ENCODE measurements at regions of chr14 and their contacts with region 1.

Region 1: GRCh38 chr14:88189417-88190191 is 133.5 kb downstream of the KCNK10 start:
- DNase-seq: peak; percentile 65
- ATAC-seq: peak; percentile 96
- H3K4me3 ChIP-seq: peak overlapping the region in 1 of 2 experiments; percentile 39; a peak in 2 of 4 replicates
- H3K27ac ChIP-seq: no peak overlapping the region
- H3K4me1 ChIP-seq: 0 out of 2 replicates have a peak, but pooled peaks cover 2% of the 10 kb centered on the region
- H3K27me3 ChIP-seq: peaks cover 6% of the 10 kb centered on the region; the same call in 1 of the 2 replicates
- CTCF ChIP-seq: peak; percentile 76

Region 2: DNA sequence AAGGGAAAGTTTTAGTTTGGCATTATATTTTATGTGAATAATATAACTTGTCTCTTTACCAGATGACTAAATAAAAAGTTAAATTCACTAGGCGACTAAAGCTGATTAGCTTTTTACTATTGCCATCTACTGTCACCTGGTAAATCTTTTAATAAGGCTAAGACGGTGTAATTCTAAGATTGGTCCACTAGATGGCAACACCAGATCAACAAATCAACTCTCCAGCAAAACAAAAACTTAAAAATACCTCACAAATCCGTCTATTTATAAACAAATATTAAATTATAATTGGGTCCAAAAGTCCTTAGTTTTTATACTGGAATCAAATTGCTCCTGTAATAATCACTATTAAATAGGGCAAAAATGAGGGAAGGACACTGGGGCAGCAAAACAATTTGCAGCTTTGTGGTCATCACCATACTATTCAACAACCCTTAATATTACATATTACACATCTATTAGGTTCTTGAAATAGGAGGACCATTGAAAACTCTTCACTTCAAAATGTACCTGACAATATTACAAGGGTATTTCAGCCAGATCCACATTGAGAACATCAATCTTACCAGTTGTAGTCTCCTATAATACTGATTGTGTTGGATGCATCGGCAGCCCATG is 244.5 kb before region 1 on chr14:
- CTCF ChIA-PET with region 1: no interaction called
- POLR2A ChIA-PET with region 1: no interaction called
- in situ Hi-C with region 1: no loop called
- intact Hi-C with region 1: loop called (anchors 10 kb)
- DNase-seq: peak; percentile 10
- ATAC-seq: no peak
- H3K4me3 ChIP-seq: no peak overlapping the region
- H3K27ac ChIP-seq: no peak overlapping the region
- H3K4me1 ChIP-seq: no peaks in the 10 kb centered on the region
- H3K27me3 ChIP-seq: no peaks in the 10 kb centered on the region
- CTCF ChIP-seq: peak; percentile 66; the same call in 1 of the 2 replicates

Region 3: DNA sequence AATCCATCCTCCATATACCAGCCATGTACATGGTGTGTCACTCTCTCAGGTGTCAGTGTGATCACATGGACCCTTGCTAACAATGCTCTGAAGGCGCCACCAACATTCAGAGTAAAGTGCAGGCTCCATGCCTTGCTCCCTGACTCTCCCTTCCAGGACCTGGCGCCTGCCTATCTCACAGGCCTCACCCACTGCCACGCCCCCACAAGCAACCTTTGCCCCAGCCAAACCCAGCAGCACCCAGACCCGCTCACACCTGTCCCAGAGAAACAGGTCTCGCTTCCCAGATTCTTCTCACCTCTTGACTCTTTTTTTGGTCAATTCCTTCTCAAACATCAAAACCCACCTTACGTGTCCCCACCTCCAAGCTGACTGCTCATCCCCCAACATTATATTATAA is 81.2 kb after region 1 on chr14:
- CTCF ChIA-PET with region 1: no interaction called
- POLR2A ChIA-PET with region 1: no interaction called
- in situ Hi-C with region 1: no loop called
- intact Hi-C with region 1: no loop called
- DNase-seq: no peak
- ATAC-seq: no peak
- H3K4me3 ChIP-seq: no peak overlapping the region
- H3K27ac ChIP-seq: no peak overlapping the region
- H3K4me1 ChIP-seq: no peaks in the 10 kb centered on the region
- H3K27me3 ChIP-seq: no peaks in the 10 kb centered on the region; the same call in 1 of the 2 replicates
- CTCF ChIP-seq: no peak

Region 4: DNA sequence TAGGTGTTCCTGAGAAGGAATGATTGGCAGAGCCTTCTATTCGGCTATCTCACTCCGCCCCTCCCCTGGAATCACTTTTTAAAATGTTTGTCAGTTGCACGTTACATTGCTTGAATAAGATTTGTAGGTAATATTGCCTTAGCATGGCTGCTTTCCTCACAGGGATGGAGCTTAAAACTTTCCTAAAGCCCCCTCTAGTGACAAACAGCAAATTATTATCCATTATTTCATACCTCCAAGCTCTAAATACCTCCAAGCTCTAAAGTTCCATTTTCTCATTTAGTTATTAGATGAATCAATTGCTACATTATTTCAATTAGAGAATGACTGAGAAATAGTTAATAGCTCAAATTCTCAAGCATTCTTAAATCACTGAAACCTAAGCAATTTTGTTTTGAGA is 190.8 kb after region 1 on chr14:
- CTCF ChIA-PET with region 1: interaction called, 21 read pairs
- POLR2A ChIA-PET with region 1: no interaction called
- in situ Hi-C with region 1: no loop called
- intact Hi-C with region 1: loop called (anchors 5 kb)
- DNase-seq: no peak
- ATAC-seq: no peak
- H3K4me3 ChIP-seq: no peak overlapping the region
- H3K27ac ChIP-seq: no peak overlapping the region
- H3K4me1 ChIP-seq: no peaks in the 10 kb centered on the region
- H3K27me3 ChIP-seq: no peaks in the 10 kb centered on the region
- CTCF ChIP-seq: peak; percentile 44; the same call in 1 of the 2 replicates

Region 5: GRCh38 chr14:88437658-88438057 is 248.1 kb after region 1 on chr14:
- CTCF ChIA-PET with region 1: interaction called, 5 read pairs
- POLR2A ChIA-PET with region 1: no interaction called
- in situ Hi-C with region 1: no loop called
- intact Hi-C with region 1: loop called (anchors 5 kb)
- DNase-seq: no peak
- ATAC-seq: no peak
- H3K4me3 ChIP-seq: no peak overlapping the region
- H3K27ac ChIP-seq: no peak overlapping the region
- H3K4me1 ChIP-seq: no peaks in the 10 kb centered on the region
- H3K27me3 ChIP-seq: no peaks in the 10 kb centered on the region
- CTCF ChIP-seq: peak; percentile 52; the same call in 1 of the 2 replicates

Region 6: DNA sequence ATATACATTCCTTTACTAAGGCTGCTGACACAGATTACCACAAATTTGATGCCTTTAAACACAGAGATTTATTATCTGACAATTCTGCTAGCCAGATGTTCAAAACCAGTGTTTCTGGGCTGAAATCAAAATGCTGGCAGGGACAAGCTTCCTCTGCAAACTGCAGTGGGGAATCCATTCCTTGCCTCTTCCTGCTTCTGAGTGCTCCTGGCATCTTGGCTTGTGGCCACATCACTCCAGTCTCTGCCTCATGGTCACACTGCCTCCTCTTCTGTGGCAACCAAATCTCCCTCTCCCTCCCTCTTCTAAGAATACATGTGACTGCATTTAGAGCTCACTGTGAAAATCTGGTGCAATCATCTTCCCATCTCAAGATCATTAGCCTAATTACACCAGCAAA is 870.6 kb after region 1 on chr14:
- CTCF ChIA-PET with region 1: no interaction called
- POLR2A ChIA-PET with region 1: no interaction called
- in situ Hi-C with region 1: no loop called
- intact Hi-C with region 1: no loop called
- DNase-seq: no peak
- ATAC-seq: no peak
- H3K4me3 ChIP-seq: no peak overlapping the region
- H3K27ac ChIP-seq: no peak overlapping the region
- H3K4me1 ChIP-seq: no peaks in the 10 kb centered on the region
- H3K27me3 ChIP-seq: no peaks in the 10 kb centered on the region
- CTCF ChIP-seq: no peak